Activated CD4-positive, alpha-beta memory T cell treated with anti-CD3 and anti-CD28 coated beads, Interleukin-2, amount 10 ng/mL, durations not matched to agents 7 days and 5 days (primary cell): ENCODE measurements at regions of chr11 and their contacts with region 1.

Region 1: DNA sequence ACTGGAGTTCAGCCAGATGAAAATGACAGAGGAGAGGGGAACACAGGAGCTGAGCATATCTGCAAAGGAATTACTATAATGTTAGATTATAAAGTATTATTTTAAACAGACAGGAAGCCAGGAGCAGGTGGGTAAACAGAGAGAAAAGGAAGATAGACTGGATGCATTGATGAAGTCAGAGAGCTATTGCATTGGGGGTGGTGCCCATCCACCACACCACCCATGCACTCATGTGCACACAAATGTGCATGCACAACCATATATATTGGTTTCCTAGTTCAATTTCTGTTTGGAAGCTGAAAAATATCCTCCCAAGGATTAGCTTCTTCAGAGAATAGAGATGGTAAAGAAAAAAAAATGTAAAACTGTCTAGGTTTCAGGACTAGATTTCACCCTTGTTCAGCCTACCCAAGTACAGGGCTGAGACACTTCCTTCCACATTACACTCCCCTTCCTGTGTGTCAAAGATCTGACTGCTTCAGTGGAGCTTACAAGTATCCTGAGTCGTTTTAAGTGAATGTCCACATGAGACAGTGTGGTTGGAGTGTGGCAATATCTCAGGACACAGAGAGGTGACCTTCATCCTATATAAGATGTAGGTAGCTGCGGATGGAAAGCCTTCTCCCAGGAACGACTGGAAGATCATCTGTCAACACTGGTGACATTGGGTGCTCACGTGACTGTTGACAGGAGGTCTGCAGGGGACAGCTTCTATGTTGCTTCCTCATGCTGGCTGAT is 12.2 kb upstream of the SMPD1 start:
- DNase-seq: peak; percentile 34
- H3K4me3 Mint-ChIP-seq: peak overlapping the region; percentile 24
- H3K27ac Mint-ChIP-seq: peak overlapping the region; percentile 87
- H3K4me1 Mint-ChIP-seq: peaks cover 35% of the 10 kb centered on the region
- H3K27me3 Mint-ChIP-seq: no peaks in the 10 kb centered on the region

Region 2: DNA sequence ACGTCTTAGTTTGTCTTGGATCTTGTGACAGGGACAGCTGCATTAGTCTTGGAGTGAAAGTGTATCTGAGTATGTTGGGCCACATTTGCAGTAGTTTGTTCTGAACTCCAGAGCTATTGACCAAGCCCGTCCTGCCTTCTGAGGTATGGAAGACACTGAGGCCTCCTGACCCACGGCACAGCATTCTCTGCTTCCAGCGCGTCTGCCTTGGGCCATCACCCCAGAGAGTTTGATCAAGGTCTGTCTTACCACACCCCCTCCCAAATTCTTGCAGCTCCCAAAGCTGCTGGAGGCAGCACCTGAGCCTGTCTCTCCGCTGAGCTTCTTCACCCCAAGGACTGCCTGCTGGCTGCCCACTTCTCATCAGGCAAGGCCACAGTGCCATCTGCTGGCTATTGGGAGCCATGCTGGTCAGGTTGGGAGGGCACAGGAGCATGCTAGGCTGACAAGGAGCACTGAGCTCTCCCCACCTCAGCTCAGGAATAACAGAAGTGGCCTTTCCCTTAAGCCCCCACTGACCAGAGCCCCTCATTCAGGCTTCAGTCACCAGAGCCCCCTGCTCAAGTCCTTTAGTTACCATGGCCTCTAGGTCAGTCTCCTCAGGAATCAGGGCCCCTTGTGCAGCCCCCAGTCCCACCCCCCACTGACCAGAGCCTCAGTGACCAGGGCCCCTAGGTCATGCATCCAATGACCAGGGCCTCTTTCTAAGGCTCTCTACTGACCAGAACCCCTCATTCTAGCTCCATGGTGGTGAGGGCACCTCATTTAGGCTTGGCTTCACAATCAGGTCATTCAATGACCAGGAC is 15.0 kb before region 1 on chr11:
- CTCF ChIA-PET with region 1: interaction called, 76 read pairs
- POLR2A ChIA-PET with region 1: interaction called, 4 read pairs
- DNase-seq: peak; percentile 78
- H3K4me3 Mint-ChIP-seq: no peak overlapping the region
- H3K27ac Mint-ChIP-seq: no peak overlapping the region
- H3K4me1 Mint-ChIP-seq: no peaks in the 10 kb centered on the region
- H3K27me3 Mint-ChIP-seq: no peaks in the 10 kb centered on the region

Region 3: GRCh38 chr11:6431861-6432260 is 53.8 kb after region 1 on chr11:
- CTCF ChIA-PET with region 1: interaction called, 510 read pairs
- POLR2A ChIA-PET with region 1: no interaction called
- DNase-seq: no peak
- H3K4me3 Mint-ChIP-seq: no peak overlapping the region
- H3K27ac Mint-ChIP-seq: no peak overlapping the region
- H3K4me1 Mint-ChIP-seq: peaks cover 4% of the 10 kb centered on the region
- H3K27me3 Mint-ChIP-seq: peaks cover 8% of the 10 kb centered on the region

Region 4: DNA sequence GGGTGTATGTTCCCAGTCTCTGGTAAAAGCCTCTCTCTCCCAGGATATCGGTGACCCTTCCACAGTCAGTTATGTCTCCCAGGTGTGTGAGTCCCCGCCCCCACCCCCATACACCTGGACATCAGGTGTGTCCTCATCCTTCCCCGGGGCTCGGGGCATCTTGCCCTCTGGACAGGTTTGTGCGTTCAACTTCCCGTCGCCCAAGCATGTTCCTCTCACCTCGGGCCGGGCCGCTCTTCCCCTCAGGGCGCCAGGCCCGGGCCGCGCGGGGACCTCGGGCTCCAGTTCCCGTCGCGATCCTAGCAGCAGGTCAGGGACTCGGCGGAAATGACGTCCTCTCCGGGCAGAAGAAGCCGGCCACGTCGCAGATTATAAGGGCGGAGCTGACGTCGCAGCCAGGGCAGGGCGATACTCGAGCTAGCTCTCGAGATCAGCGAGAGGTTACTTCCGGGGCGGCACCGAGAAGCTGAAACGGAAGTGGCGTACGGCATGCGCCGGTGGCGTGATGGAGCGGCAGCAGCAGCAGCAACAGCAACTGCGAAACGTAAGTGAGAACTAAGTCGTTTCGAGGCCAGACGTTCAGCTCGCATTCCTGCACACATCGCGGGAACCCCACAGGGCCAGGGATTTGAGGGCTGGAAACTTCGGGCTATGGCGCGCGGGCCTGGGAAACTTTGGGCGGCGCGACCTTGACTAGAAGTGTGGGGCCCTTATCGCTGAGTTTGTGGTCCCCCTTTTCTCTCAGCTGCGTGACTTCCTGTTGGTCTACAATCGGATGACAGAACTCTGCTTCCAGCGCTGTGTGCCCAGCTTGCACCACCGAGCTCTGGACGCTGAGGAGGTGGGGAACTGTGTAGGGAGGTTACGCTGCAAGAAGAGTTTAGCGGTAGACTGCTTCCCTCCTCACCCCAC is 103.2 kb after region 1 on chr11 and contains the starts of genes ARFIP2 and TIMM10B:
- CTCF ChIA-PET with region 1: interaction called, 51 read pairs
- POLR2A ChIA-PET with region 1: interaction called, 25 read pairs
- DNase-seq: peak; percentile 98
- H3K4me3 Mint-ChIP-seq: peak within 1 kb of the TSS; percentile 97
- H3K27ac Mint-ChIP-seq: peak within 1 kb of the TSS; percentile 97
- H3K4me1 Mint-ChIP-seq: peaks cover 41% of the 10 kb centered on the region
- H3K27me3 Mint-ChIP-seq: no peaks in the 10 kb centered on the region
- total RNA-seq, gene ARFIP2: 38.5 to 39.2 TPM
- total RNA-seq, gene TIMM10B: 39.0 to 40.5 TPM

Region 5: GRCh38 chr11:6523253-6523652 is 145.2 kb after region 1 on chr11:
- CTCF ChIA-PET with region 1: interaction called, 11 read pairs
- POLR2A ChIA-PET with region 1: no interaction called
- DNase-seq: no peak
- H3K4me3 Mint-ChIP-seq: no peak overlapping the region
- H3K27ac Mint-ChIP-seq: no peak overlapping the region
- H3K4me1 Mint-ChIP-seq: peaks cover 16% of the 10 kb centered on the region
- H3K27me3 Mint-ChIP-seq: no peaks in the 10 kb centered on the region

Region 6: GRCh38 chr11:6682936-6683861 is 305.1 kb after region 1 on chr11 and contains the start of gene MRPL17:
- CTCF ChIA-PET with region 1: interaction called, 35 read pairs
- POLR2A ChIA-PET with region 1: no interaction called
- DNase-seq: peak; percentile 100
- H3K4me3 Mint-ChIP-seq: peak within 1 kb of the TSS; percentile 96
- H3K27ac Mint-ChIP-seq: peak within 1 kb of the TSS; percentile 95
- H3K4me1 Mint-ChIP-seq: peaks cover 31% of the 10 kb centered on the region
- H3K27me3 Mint-ChIP-seq: no peaks in the 10 kb centered on the region
- total RNA-seq, gene MRPL17: 54.1 to 56.3 TPM